ENCODE measurements at regions of chr10 and their contacts with region 1.

Region 1: GRCh38 chr10:70758757-70759514 is 26.2 kb downstream of the TBATA start:
- DNase-seq: peak; percentile 16
- H3K4me3 ChIP-seq: no peak overlapping the region
- CTCF ChIP-seq: peak; percentile 74

Region 2: GRCh38 chr10:70461215-70461986 is 297.5 kb before region 1 on chr10:
- CTCF ChIA-PET with region 1: interaction called, 30 read pairs
- POLR2A ChIA-PET with region 1: no interaction called
- DNase-seq: peak; percentile 14
- H3K4me3 ChIP-seq: no peak overlapping the region
- CTCF ChIP-seq: peak; percentile 87

Region 3: DNA sequence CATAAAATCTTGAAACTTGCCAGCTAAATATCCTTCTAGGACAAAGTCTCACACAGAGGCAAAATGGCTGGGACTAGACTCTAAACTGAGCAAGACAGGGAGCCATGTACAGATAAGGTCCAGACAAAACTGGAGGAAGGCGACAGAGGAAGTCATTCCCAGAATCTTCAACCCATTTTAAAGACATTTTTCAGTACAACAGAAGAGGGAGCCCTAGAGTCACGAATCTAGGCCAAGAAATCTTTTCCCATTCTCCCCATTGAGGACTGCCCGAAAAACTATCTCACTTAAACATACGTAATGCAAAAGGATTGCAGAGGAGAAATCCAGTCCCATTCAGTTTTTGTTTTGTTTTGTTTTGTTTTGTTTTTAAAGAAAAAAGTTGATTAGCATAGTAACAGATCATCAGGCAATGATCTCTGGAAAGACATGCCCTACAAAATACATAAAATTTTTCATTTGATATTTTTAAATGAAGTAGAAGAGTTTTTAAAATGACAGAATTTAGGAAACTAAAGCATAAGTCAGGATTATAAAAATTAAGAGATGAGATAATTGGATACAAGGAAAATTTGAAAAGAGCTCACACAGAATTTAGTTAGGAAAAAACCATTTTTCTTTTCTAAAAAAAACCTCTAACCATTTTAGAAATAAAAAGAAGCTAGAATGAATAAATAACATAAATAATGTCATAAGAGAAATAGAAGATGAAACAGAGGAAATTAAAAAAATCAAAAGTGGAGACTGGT is 139.5 kb before region 1 on chr10:
- CTCF ChIA-PET with region 1: interaction called, 18 read pairs
- POLR2A ChIA-PET with region 1: no interaction called
- DNase-seq: no peak
- H3K4me3 ChIP-seq: no peak overlapping the region
- CTCF ChIP-seq: peak; percentile 4

Region 4: GRCh38 chr10:70771311-70772099 is 12.6 kb after region 1 on chr10:
- CTCF ChIA-PET with region 1: interaction called, 12 read pairs
- POLR2A ChIA-PET with region 1: no interaction called
- DNase-seq: no peak
- H3K4me3 ChIP-seq: no peak overlapping the region
- CTCF ChIP-seq: no peak

Region 5: DNA sequence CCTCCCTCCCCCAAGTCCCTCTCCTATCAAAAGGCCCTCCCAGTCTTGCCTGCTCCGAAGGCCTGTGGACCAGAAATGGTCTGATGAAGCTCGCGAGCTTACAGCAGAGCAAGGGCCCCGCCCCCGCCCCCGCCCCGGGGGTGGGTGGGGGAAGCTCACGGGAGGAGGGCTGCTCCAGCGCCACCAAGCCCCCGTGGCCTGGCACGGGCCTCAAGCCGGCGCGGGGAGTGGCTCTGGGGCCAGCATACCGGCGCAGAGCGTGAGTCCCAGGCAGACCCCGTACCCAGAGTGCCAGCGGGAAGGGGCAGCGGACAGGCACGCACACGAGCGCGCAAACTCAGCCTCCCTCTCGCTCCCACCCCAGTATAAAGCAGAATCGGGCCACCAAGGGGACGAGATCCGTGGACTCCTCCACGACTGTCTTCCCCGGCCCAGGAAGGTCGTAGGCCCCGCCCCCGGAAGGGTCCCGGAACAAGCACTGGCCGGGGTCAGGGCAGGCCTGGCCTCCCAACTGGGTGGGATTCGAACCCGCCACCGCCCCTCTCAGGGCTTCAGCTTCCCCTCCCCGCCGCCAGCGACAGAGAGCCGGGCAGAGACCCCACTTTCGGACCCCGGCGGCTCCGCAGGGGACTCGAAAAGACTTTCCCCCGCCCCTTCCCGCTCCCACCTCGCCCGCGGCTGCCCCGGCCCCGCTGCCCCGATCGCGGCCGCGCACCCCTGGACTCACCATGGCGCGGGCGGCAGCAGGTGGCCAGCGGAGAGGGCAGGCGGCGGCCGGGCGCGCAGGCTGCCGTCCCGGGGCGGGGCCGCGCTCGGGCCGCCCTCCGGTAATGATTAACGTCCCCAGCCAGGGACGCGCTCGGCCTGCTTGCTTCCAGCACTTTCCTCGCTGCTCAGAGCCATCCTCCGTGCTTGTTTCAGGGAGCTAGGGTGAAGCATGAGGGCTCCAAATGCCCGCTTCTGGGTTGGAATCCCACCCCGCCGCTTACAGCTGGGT is 129.2 kb after region 1 on chr10 and contains the start of gene PCBD1:
- CTCF ChIA-PET with region 1: interaction called, 128 read pairs
- POLR2A ChIA-PET with region 1: interaction called, 4 read pairs
- DNase-seq: no peak
- H3K4me3 ChIP-seq: peak within 1 kb of the TSS; percentile 68
- CTCF ChIP-seq: no peak

Measured in AG04449 (cell line).